ENCODE measurements at regions of chr4 and their contacts with region 1.

Region 1: DNA sequence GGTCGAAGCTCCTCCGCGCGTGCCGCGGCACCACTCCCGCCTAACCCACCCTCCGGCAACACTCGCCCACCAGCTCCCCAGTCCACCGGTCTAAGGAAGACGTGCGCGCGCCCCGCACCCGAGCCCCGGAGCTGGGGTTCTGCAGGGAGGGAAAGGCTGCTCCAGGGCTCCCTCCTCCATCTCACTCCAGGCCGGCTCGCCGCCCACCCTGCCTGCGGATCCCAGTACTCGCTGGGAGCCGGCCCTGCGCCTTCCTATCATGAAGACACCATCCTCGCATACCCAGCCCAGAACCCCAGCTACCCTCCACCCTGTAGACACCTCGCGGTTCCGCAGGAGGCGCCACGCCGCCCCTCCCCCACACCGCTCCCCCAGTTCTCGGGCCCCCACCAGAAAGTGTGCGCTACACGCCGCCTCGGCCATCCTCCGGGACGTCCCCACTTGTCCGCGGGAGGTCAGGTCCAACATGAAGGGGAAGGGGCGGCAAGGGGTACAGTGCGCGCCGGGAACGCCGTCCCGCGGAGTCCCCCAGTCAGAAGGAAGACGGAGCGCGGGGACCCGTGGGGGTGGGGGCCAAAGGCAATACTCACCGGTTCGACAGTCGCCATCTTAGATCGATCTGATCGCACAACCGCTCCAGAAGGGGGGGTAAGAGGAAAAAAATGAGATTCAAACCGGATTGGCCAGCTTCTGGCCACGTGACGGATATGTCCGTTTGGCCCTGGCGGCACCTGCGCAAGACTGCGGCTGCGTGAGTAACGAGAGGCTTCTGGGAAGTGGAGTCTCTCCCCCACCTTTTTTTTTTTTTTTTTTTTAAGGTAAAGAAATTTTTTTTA is at the start of gene EIF4E:
- DNase-seq: peak; percentile 94 to 98
- H3K4me3 ChIP-seq: peak within 1 kb of the TSS; percentile 84 to 93
- H3K27ac ChIP-seq: peak within 1 kb of the TSS; percentile 92 to 97
- H3K4me1 ChIP-seq: peaks cover 0 to 8% of the 10 kb centered on the region in 2 donors
- H3K27me3 ChIP-seq: no peaks in the 10 kb centered on the region
- CTCF ChIP-seq: peak in 2 of 3 experiments; percentile 23 to 26
- total RNA-seq, gene EIF4E: 6.0 TPM

Region 2: DNA sequence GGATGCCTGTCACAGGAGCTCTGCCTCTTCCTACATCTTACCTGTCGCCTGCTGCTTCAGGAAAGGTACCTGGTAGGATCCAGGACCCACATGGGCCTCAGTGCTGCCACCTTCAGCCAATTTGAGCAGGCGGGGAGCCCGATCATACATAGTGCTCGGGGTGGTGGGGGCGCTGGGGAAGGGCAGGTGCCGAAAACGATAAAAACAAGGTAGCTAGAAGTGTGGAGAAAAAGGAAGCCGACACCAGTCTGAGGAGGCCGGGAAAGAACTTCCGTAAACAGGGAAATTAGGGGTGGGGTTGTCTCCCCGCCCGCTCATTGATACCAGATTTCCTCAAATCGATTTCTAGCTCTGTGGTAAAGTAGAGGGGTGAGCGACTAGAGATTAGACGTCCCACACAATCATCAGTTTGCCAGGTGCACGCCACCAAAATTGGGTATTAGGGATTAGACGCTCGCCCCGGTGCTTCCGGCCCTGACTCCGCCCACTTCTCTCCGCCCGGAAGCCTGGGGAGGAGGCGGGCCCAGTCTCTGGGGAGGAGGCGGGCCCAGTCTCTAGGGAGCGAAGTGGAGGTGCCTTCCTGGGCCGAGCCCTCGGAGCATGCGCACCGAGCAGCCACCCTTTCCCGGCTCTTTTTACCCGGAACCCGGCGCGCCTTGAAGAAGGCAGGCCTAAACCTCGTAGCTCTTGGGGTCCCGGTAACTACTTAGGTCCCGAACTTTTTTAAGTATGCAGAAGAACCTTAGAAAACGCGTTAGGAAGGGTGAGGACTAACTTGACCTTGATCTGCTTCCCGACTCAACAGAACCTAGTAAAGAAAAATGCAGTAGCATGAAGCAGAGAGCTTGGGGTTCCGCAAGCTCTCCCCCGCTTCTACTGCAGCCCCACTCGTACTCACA is 785.5 kb before region 1 on chr4 and contains the start of gene STPG2:
- intact Hi-C with region 1: loop called (anchors 10 kb)
- DNase-seq: peak; percentile 64 to 94
- H3K4me3 ChIP-seq: peak within 1 kb of the TSS; percentile 67 to 79
- H3K27ac ChIP-seq: peak within 1 kb of the TSS; percentile 62 to 77
- H3K4me1 ChIP-seq: no peaks in the 10 kb centered on the region
- H3K27me3 ChIP-seq: no peaks in the 10 kb centered on the region
- CTCF ChIP-seq: peak in 2 of 3 experiments; percentile 31 to 36
- total RNA-seq, gene STPG2: not detected

Region 3: DNA sequence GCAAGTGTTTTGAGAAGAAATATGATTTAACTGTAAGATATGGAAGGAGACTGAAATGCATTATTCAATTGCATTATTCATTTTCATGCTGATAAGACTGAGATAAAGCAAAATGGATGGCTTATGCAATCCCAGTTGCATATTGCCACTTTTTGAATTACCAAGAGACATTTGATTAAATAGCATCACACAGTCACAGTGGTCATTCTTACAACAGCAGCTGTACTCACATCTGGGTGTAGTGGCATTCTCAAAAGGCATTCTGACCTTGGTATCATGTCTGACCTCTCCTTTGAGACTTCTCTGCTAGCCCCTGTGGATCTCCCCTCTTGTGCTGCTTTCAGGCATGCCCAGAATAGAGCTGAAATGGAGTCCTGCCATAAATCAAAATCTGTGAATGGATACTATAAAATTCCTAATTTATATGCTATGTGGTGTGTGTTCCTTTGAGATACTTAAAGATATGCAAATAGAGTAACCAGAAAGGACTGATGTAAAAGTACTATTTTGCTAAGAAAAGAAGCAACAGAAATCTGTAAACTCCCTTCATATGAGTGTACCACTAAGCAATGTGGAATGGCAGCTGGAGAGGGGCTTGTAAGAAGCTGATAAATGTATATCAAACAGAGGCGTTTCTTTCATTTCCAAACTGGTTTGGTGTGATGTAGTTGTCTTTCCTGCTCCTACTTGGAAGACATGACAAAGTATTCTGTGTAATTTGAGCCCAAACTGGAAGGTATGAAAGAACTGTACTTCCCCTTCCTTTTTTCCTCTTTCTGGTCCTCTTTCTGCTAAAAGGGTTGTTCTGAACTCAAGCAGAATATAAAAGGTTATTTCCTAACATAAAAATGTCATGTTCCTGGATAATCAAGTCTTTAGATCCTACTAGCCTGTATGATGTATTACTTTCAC is 41.4 kb after region 1 on chr4:
- intact Hi-C with region 1: no loop called
- DNase-seq: no peak
- H3K4me3 ChIP-seq: no peak overlapping the region
- H3K27ac ChIP-seq: no peak overlapping the region
- H3K4me1 ChIP-seq: no peaks in the 10 kb centered on the region
- H3K27me3 ChIP-seq: no peaks in the 10 kb centered on the region
- CTCF ChIP-seq: no peak

Region 4: GRCh38 chr4:98995183-98996055 is 66.7 kb after region 1 on chr4 and contains the start of gene METAP1:
- intact Hi-C with region 1: loop called (anchors 1 kb)
- DNase-seq: peak; percentile 82 to 96
- H3K4me3 ChIP-seq: peak within 1 kb of the TSS; percentile 91
- H3K27ac ChIP-seq: peak within 1 kb of the TSS; percentile 81 to 91
- H3K4me1 ChIP-seq: peaks cover 0 to 7% of the 10 kb centered on the region in 2 donors
- H3K27me3 ChIP-seq: no peaks in the 10 kb centered on the region
- CTCF ChIP-seq: peak; percentile 39 to 64 (median 58)
- total RNA-seq, gene METAP1: 53.2 TPM

Region 5: GRCh38 chr4:99061048-99061700 is 132.5 kb after region 1 on chr4:
- intact Hi-C with region 1: loop called (anchors 5 kb)
- DNase-seq: no peak
- H3K4me3 ChIP-seq: no peak overlapping the region
- H3K27ac ChIP-seq: peak overlapping the region; percentile 32 to 47
- H3K4me1 ChIP-seq: peaks cover 0 to 7% of the 10 kb centered on the region in 2 donors
- H3K27me3 ChIP-seq: no peaks in the 10 kb centered on the region
- CTCF ChIP-seq: no peak

Region 6: GRCh38 chr4:99293357-99293756 is 364.6 kb after region 1 on chr4:
- intact Hi-C with region 1: loop called (anchors 10 kb)
- DNase-seq: no peak
- H3K4me3 ChIP-seq: no peak overlapping the region
- H3K27ac ChIP-seq: no peak overlapping the region
- H3K4me1 ChIP-seq: peaks cover 0 to 2% of the 10 kb centered on the region in 2 donors
- H3K27me3 ChIP-seq: no peaks in the 10 kb centered on the region
- CTCF ChIP-seq: no peak

Measured in ascending aorta (tissue), 2 donors.